ENCODE measurements at regions of chr10 and their contacts with region 1.

Region 1: DNA sequence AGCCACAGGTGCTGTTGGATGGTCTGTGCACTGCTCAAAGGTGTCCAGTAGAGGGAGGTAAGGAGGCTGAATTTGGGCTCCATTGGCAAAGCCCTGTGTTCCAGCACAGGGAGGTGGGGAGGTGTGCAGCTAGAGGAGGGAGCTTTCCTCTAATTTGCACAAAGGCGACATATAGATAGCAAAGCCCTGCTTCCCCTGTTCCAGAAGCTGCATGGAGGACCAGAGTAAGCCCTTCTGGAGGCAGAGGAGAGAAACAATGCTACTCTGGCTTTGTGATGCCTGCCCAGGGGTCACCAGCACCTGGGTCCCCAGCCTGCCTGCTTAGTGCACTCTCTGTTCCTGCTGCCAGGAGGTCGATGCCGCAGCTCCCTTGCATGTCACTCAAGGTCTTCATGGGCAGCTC is 3.4 kb upstream of the ARHGAP22 start:
- DNase-seq: no peak
- H3K4me3 ChIP-seq: no peak overlapping the region
- CTCF ChIP-seq: peak; percentile 77

Region 2: DNA sequence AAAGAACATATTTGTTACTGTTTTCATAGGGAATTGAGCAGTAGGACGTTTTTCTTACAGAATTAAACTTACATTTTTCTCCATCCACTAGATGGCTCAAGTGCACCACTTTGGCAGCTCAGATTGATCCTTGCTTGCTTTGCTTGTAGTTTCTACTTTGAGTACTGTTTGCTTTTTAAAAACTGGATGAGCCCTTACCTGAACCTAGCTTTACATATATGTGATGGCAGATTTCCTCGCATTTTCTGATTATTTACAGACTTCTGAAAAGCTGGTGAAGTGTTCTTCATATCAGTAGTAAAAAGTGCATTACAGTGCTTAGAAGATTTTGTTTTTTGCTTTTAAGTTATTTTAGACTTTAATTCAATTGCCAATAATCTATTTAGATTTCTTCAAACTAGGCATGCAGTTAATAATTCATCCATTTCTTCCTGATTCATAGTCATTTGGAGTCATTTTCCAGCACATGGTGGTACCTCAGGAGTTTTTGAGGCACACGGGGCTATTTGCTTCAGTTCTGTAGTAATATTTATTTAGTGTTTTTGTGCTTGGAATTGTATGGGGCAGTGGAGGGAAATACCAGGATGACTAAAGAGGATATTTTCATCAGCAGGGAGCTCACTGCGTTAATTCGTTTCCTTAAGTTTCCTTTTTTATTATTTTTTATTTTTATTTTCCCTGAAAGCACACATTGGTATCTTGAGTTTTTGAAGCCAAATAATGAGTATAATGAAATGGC is 244.5 kb before region 1 on chr10:
- CTCF ChIA-PET with region 1: interaction called, 16 read pairs
- POLR2A ChIA-PET with region 1: no interaction called
- DNase-seq: no peak
- H3K4me3 ChIP-seq: no peak overlapping the region
- CTCF ChIP-seq: peak; percentile 55

Region 3: DNA sequence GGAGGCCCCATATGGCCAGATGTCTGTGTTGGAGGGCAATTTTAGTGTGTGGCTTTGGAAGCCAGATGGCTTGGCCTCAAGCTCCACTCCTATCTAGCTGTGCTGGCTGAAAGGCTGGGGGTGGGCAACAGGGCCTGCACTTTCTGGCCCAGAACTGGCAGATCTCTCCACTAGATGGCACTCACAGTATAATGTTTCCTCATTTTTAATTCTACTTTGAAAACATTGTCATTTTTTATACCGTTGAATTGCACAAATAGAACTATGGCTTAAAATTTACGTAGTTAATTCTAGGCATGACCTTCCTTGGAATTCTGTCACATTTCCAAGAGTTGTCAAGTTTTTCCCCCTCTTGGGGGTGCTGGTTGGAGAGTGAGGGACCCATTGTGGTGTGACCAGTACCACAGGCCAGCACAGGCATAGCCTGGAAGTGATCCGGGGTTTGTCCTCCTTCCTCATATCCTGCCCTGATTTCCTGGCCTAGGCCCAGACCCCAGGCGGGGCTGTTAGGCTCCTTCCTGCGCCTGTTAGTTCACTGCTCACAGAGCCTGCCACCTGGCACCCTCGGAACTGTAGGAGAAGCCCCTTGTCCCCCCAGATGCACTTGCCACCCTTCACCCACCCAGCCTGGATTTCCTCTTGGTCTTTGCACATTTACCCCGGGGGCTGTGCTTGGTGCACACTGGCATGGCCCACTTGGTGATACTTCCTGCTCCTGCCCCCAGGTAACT is 56.3 kb before region 1 on chr10:
- CTCF ChIA-PET with region 1: interaction called, 12 read pairs
- POLR2A ChIA-PET with region 1: no interaction called
- DNase-seq: no peak
- H3K4me3 ChIP-seq: no peak overlapping the region
- CTCF ChIP-seq: peak; percentile 68

Region 4: GRCh38 chr10:48589266-48589665 is 19.0 kb before region 1 on chr10:
- CTCF ChIA-PET with region 1: interaction called, 40 read pairs
- POLR2A ChIA-PET with region 1: interaction called, 35 read pairs
- DNase-seq: peak; percentile 94
- H3K4me3 ChIP-seq: no peak overlapping the region
- CTCF ChIP-seq: no peak

Region 5: GRCh38 chr10:48634198-48634983 is 26.1 kb after region 1 on chr10:
- CTCF ChIA-PET with region 1: interaction called, 11 read pairs
- POLR2A ChIA-PET with region 1: interaction called, 4 read pairs
- DNase-seq: peak; percentile 49
- H3K4me3 ChIP-seq: no peak overlapping the region
- CTCF ChIP-seq: no peak